PC-3 (cell line): ENCODE measurements at regions of chr6 and their contacts with region 1.

Region 1: GRCh38 chr6:45922728-45923351 is 92.8 kb downstream of the CLIC5 start:
- DNase-seq: peak; percentile 72
- ATAC-seq: peak; percentile 72
- H3K4me3 ChIP-seq: no peak overlapping the region; the same call in 1 of the 2 replicates
- H3K27ac ChIP-seq: no peak overlapping the region
- H3K4me1 ChIP-seq: peaks cover 33% of the 10 kb centered on the region
- H3K27me3 ChIP-seq: no peaks in the 10 kb centered on the region
- CTCF ChIP-seq: peak; percentile 91

Region 2: DNA sequence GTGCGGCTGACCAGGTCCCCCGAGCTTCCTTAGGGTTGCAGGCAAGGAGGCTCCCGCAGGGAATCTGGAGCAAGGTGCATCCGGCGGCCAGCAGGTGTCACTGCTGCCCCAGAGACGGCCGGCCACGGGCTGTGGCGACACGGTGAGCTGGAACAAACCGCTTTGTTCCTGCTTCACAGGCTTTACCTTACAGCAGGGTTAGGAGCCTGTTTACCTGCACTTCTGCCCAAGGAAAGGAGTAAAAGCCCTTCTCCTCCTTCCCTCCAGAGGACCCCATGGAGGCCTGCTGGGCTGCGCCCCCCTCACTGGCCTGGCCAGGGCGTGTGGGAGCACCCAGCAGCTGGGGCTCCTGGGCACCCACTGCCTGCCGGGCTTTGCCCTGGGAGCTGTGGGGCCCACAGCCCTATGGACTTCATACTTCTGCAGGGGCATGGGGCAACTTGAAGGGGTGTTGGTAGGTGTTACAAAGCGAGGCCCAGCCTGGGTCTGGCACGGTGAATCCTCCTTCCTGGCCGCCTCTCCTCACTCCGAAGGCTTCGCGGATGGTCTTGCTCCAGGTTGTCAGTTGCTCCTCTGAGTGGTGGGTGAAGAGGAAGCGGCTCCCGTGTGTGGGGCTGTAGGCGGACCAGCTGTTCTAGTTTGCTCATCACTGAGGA is 1446.9 kb before region 1 on chr6:
- CTCF ChIA-PET with region 1: interaction called, 7 read pairs
- POLR2A ChIA-PET with region 1: no interaction called
- intact Hi-C with region 1: loop called (anchors 5 kb)
- DNase-seq: peak; percentile 90
- ATAC-seq: peak; percentile 87
- H3K4me3 ChIP-seq: peak overlapping the region; percentile 18; the same call in 1 of the 2 replicates
- H3K27ac ChIP-seq: no peak overlapping the region
- H3K4me1 ChIP-seq: peaks cover 23% of the 10 kb centered on the region
- H3K27me3 ChIP-seq: no peaks in the 10 kb centered on the region
- CTCF ChIP-seq: peak; percentile 93

Region 3: DNA sequence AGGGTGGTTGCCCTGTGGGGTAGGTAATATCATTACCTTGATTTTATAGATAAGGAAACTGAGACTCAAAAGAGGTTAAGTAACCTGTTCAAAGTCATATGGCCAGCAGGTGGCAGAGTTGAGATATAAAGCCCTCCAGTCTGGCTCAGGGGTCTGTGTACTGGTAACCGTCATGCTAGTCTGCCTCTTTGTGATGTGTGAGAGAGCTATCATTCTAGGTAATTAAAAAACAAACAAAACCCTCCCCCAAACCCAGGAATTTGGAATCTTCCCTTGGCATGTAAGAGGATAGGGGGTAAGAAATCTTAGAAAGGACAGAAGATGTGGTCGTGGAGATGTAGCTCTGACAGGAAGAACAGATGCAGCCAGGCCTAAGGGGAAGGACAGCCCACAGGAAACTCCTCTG is 1329.3 kb before region 1 on chr6:
- CTCF ChIA-PET with region 1: no interaction called
- POLR2A ChIA-PET with region 1: no interaction called
- intact Hi-C with region 1: loop called (anchors 5 kb)
- DNase-seq: peak; percentile 74
- ATAC-seq: peak; percentile 51
- H3K4me3 ChIP-seq: no peak overlapping the region
- H3K27ac ChIP-seq: no peak overlapping the region
- H3K4me1 ChIP-seq: no peaks in the 10 kb centered on the region
- H3K27me3 ChIP-seq: peaks cover 3% of the 10 kb centered on the region; the same call in 1 of the 2 replicates
- CTCF ChIP-seq: peak; percentile 86

Region 4: DNA sequence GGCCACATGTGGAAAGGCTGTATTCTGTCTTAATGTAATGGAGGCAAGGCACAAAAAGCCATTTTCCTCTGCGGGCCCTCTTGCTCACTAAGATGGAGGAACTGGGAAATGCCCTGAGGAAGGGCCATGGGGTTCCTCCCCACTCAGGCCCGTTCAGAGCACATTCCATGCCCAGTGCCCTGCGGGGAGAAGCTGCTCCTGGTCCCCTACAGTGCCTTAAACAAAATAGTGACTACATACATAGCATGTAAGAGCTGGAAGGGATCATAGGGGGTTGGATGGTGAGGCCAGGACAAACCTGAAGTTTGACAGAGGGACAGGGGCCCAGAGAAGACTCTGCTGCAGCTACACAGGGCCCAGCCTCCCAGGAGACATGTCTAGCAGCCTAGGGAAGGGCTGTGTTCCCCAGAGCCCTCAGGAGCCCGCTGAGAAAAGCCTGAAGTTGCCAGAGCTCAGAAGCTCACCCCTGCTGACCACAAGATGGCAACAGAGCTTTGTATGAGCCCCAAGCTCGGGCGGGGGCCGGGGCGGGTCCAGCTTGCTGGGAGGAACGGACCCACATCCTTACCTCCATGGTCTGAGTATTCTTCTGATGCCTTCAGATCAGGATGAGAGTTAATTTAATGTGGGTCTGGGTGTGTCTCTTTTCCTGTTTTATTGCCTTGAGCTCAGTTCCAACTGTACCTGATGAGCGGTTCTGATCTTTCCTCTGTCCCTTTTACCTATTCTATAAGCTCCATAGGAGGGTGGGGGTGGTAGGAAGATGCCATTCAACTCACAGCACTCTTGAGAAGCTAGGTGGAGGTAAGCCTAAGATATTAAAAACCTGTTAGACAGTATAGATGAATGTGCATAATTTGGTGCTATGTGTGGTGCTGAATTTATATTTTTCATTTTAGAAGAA is 1292.5 kb before region 1 on chr6:
- CTCF ChIA-PET with region 1: interaction called, 21 read pairs
- POLR2A ChIA-PET with region 1: no interaction called
- intact Hi-C with region 1: no loop called
- DNase-seq: peak; percentile 71
- ATAC-seq: peak; percentile 97
- H3K4me3 ChIP-seq: no peak overlapping the region
- H3K27ac ChIP-seq: no peak overlapping the region
- H3K4me1 ChIP-seq: no peaks in the 10 kb centered on the region
- H3K27me3 ChIP-seq: no peaks in the 10 kb centered on the region
- CTCF ChIP-seq: peak; percentile 88

Region 5: DNA sequence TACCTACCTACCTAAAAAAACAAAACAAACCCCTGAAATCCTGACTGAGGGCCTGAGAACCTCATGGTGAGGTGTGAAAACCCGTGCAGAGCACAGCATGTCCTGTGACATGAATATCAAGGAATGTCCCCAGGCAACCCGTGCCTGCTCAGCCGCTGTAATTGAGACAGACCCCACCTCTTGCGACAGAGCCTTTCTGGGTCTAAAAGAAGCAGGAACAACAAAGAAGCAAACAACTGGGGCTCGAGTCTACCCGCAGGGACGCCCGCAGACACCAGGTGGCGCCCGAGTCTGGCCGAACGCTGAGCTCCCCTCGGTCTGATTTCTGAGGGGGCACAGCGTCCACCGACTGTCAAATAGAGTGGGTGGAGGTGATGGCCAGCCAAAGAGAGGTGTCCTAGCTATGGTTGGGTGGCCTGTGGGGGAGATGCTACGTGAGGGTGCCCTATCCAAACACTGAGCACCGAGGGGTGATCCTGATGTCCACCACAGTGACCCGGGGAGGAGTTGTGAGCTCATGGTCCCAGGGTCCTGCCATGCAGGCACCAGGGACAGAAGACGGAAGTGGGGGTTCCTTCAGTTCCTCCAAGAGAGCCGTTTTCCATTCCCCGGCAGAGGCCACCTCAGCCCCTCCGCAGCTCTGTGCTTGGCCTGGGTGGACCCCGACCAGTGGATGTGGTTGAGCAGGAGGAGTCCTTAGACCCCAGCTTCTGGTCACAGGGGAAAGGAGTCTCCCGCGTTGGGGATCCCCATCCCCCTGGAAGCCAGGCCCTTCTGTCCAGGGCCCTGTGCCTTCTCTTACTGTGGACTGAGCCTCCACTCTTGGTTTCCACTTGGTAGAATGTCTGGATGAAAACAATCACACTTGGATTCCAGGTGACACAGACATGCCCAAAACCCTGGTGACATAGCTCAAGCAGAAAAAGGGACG is 1267.2 kb before region 1 on chr6:
- CTCF ChIA-PET with region 1: interaction called, 9 read pairs
- POLR2A ChIA-PET with region 1: no interaction called
- intact Hi-C with region 1: loop called (anchors 1 kb)
- DNase-seq: peak; percentile 58
- ATAC-seq: peak; percentile 75
- H3K4me3 ChIP-seq: peak overlapping the region; percentile 11; the same call in 1 of the 2 replicates
- H3K27ac ChIP-seq: no peak overlapping the region
- H3K4me1 ChIP-seq: peaks cover 6% of the 10 kb centered on the region
- H3K27me3 ChIP-seq: no peaks in the 10 kb centered on the region
- CTCF ChIP-seq: peak; percentile 97

Region 6: GRCh38 chr6:44730691-44731391 is 1192.0 kb before region 1 on chr6:
- CTCF ChIA-PET with region 1: no interaction called
- POLR2A ChIA-PET with region 1: no interaction called
- intact Hi-C with region 1: loop called (anchors 5 kb)
- DNase-seq: peak; percentile 87
- ATAC-seq: peak; percentile 91
- H3K4me3 ChIP-seq: peak overlapping the region; percentile 39; the same call in 1 of the 2 replicates
- H3K27ac ChIP-seq: peak overlapping the region; percentile 84
- H3K4me1 ChIP-seq: peaks cover 30% of the 10 kb centered on the region
- H3K27me3 ChIP-seq: no peaks in the 10 kb centered on the region
- CTCF ChIP-seq: no peak

Region 7: GRCh38 chr6:45086360-45087084 is 836.3 kb before region 1 on chr6:
- CTCF ChIA-PET with region 1: interaction called, 3 read pairs
- POLR2A ChIA-PET with region 1: no interaction called
- intact Hi-C with region 1: loop called (anchors 2 kb)
- DNase-seq: peak; percentile 37
- ATAC-seq: no peak
- H3K4me3 ChIP-seq: no peak overlapping the region
- H3K27ac ChIP-seq: no peak overlapping the region
- H3K4me1 ChIP-seq: no peaks in the 10 kb centered on the region
- H3K27me3 ChIP-seq: no peaks in the 10 kb centered on the region
- CTCF ChIP-seq: 0 out of 2 replicates have a peak, but pooled peaks have one; percentile 19

Region 8: DNA sequence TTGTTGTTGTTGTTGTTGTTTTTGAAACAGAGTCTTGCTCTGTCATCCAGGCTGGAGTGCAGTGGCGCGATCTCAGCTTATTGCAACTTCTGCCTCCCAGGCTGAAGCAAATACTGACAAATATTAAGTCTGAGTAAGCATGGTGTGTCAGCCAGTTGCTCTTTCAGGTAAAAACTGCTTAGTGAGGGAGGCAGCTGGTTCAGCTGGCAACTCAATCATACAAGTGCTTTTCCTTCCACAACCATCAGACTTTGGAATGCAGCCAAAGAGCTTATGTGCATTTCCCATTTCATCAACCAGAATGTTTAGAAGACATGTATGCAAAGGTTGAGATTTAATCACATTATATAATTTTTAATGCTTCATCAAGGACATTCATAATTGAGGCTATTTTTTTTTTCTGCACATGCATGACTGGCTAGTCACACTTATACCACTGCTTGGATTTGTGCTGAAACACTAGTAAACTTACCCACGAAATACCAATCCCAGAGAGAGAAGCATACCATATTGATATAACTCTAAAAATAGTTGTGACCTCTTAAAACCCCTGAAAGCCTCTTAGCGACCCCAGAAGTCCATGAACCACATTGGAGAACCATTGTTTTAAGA is 36.8 kb after region 1 on chr6:
- CTCF ChIA-PET with region 1: no interaction called
- POLR2A ChIA-PET with region 1: no interaction called
- intact Hi-C with region 1: no loop called
- DNase-seq: peak; percentile 71
- ATAC-seq: no peak
- H3K4me3 ChIP-seq: no peak overlapping the region
- H3K27ac ChIP-seq: no peak overlapping the region
- H3K4me1 ChIP-seq: no peaks in the 10 kb centered on the region
- H3K27me3 ChIP-seq: peaks cover 31% of the 10 kb centered on the region; the same call in 1 of the 2 replicates
- CTCF ChIP-seq: no peak